ENCODE measurements at regions of chr2 and their contacts with region 1.

Region 1: DNA sequence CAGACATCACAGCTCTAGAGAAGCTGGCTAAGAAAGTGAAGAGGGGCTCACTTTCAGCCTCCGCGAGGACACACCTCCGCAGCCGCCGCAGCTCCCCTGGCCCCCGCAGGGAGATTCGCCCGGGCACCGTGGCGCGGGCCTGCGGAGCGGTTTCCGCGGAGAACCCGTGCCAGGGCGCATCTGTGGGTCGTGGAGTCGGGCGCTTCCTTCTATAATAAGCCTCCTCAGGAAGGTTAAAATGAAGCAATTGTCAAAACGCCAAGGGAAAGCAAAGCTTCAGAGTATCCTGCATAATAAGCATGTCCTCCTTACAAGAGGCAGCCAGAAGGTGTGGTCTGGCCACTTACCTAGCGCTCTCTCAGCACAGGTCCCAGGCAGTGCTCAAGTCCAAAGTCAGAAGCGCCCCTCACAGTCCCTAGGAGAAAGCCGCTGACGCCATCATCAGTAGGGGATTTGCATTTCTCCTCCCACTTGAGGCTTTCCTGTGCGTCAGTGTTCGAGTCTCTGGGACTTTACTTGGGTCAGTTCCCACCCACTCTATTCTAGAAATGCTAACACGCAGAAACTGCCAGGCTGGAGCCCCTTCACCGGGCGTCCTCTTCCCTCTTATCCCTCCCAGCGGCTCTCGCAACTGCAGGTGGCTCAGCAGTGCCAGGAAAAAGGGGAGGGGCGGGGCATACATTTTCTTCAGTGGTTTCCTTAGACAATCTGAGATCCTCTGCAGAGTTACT is at the start of gene STAT4:
- DNase-seq: peak; percentile 91
- ATAC-seq: peak; percentile 87
- H3K4me3 Mint-ChIP-seq: peak within 1 kb of the TSS; percentile 93
- H3K27ac Mint-ChIP-seq: peak within 1 kb of the TSS; percentile 96
- H3K4me1 Mint-ChIP-seq: peaks cover 70% of the 10 kb centered on the region
- H3K27me3 Mint-ChIP-seq: no peaks in the 10 kb centered on the region
- total RNA-seq, gene STAT4: 48.8 to 59.5 TPM

Region 2: GRCh38 chr2:190781604-190782198 is 369.1 kb before region 1 on chr2:
- CTCF ChIA-PET with region 1: interaction called, 4 read pairs
- POLR2A ChIA-PET with region 1: interaction called, 7 read pairs
- intact Hi-C with region 1: loop called (anchors 2 to 5 kb)
- DNase-seq: peak; percentile 77
- ATAC-seq: peak; percentile 58
- H3K4me3 Mint-ChIP-seq: no peak overlapping the region
- H3K27ac Mint-ChIP-seq: no peak overlapping the region
- H3K4me1 Mint-ChIP-seq: peaks cover 33% of the 10 kb centered on the region
- H3K27me3 Mint-ChIP-seq: no peaks in the 10 kb centered on the region

Region 3: GRCh38 chr2:191013932-191014652 is 136.7 kb before region 1 on chr2 and contains the start of gene STAT1:
- CTCF ChIA-PET with region 1: interaction called, 4 read pairs
- POLR2A ChIA-PET with region 1: no interaction called
- intact Hi-C with region 1: loop called in 1 of 2 experiments (anchors 1 kb)
- DNase-seq: peak; percentile 98
- ATAC-seq: peak; percentile 79
- H3K4me3 Mint-ChIP-seq: no peak within 1 kb of the TSS
- H3K27ac Mint-ChIP-seq: no peak within 1 kb of the TSS
- H3K4me1 Mint-ChIP-seq: peaks cover 41% of the 10 kb centered on the region
- H3K27me3 Mint-ChIP-seq: no peaks in the 10 kb centered on the region
- total RNA-seq, gene STAT1: 317 to 343 TPM

Region 4: DNA sequence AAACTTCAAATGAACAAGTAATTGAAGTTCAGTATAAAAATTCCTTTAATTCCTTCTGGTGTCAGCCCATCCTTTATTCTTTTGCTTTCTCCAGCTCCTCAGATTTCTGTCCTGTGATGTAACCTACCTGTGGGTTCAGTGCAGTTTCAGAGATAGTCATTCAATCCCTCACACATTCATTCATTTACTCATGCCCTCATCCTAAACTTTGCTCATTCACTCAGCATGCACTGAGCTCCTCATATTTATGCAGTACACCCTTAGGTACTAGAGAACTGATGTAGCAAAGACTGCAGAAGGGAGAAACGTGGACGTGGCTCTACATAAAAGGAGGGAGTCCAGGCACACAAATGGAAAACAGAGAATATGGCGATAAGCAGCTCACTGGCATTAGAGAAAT is 91.5 kb before region 1 on chr2:
- CTCF ChIA-PET with region 1: interaction called, 348 read pairs
- POLR2A ChIA-PET with region 1: no interaction called
- intact Hi-C with region 1: no loop called
- DNase-seq: no peak
- ATAC-seq: peak; percentile 89
- H3K4me3 Mint-ChIP-seq: no peak overlapping the region
- H3K27ac Mint-ChIP-seq: no peak overlapping the region
- H3K4me1 Mint-ChIP-seq: peaks cover 63% of the 10 kb centered on the region
- H3K27me3 Mint-ChIP-seq: no peaks in the 10 kb centered on the region

Region 5: GRCh38 chr2:191122638-191123294 is 28.0 kb before region 1 on chr2:
- CTCF ChIA-PET with region 1: interaction called, 5 read pairs
- POLR2A ChIA-PET with region 1: interaction called, 5 read pairs
- intact Hi-C with region 1: loop called in 1 of 2 experiments (anchors 2 kb)
- DNase-seq: no peak
- ATAC-seq: peak; percentile 69
- H3K4me3 Mint-ChIP-seq: no peak overlapping the region
- H3K27ac Mint-ChIP-seq: peak overlapping the region; percentile 72
- H3K4me1 Mint-ChIP-seq: peaks cover 43% of the 10 kb centered on the region
- H3K27me3 Mint-ChIP-seq: no peaks in the 10 kb centered on the region

Region 6: GRCh38 chr2:191189112-191189635 is 38.4 kb after region 1 on chr2:
- CTCF ChIA-PET with region 1: interaction called, 10 read pairs
- POLR2A ChIA-PET with region 1: no interaction called
- intact Hi-C with region 1: loop called in 1 of 2 experiments (anchors 1 kb)
- DNase-seq: no peak
- ATAC-seq: no peak
- H3K4me3 Mint-ChIP-seq: peak overlapping the region; percentile 19
- H3K27ac Mint-ChIP-seq: peak overlapping the region; percentile 68
- H3K4me1 Mint-ChIP-seq: peaks cover 63% of the 10 kb centered on the region
- H3K27me3 Mint-ChIP-seq: no peaks in the 10 kb centered on the region

Region 7: GRCh38 chr2:191228861-191229260 is 78.1 kb after region 1 on chr2:
- CTCF ChIA-PET with region 1: no interaction called
- POLR2A ChIA-PET with region 1: no interaction called
- intact Hi-C with region 1: no loop called
- DNase-seq: no peak
- ATAC-seq: no peak
- H3K4me3 Mint-ChIP-seq: no peak overlapping the region
- H3K27ac Mint-ChIP-seq: no peak overlapping the region
- H3K4me1 Mint-ChIP-seq: no peaks in the 10 kb centered on the region
- H3K27me3 Mint-ChIP-seq: no peaks in the 10 kb centered on the region

Region 8: DNA sequence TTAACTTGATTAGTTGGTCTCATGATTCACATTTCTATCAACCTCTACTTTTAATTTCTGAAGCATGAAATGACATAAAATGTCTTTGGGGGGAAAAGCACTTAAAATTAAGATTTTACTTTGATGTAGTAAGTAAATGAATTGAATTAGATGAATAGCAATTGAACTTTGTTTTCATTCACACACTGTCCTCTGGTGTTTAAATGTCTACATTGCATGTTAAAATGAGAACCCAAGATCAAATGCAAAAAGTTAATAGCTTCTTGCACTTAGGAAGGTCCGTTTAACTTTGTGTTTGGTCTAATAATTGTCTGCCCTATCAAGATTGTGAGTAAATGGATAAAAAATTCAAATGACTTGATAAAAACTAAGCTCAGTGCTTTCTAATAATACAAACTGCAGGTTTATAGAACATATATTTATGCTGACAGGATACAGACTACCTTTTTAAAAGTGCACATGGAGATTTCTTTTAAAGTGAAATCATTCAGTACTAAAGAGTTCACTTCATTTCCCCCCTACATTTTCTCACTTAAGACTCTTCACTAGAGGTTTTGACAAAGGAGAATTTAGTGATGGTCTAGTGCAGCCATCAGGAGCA is 370.9 kb after region 1 on chr2:
- CTCF ChIA-PET with region 1: interaction called, 13 read pairs
- POLR2A ChIA-PET with region 1: no interaction called
- intact Hi-C with region 1: no loop called
- DNase-seq: no peak
- ATAC-seq: no peak
- H3K4me3 Mint-ChIP-seq: no peak overlapping the region
- H3K27ac Mint-ChIP-seq: no peak overlapping the region
- H3K4me1 Mint-ChIP-seq: no peaks in the 10 kb centered on the region
- H3K27me3 Mint-ChIP-seq: peaks cover 6% of the 10 kb centered on the region